ENCODE measurements at regions of chr7 and their contacts with region 1.

Region 1: DNA sequence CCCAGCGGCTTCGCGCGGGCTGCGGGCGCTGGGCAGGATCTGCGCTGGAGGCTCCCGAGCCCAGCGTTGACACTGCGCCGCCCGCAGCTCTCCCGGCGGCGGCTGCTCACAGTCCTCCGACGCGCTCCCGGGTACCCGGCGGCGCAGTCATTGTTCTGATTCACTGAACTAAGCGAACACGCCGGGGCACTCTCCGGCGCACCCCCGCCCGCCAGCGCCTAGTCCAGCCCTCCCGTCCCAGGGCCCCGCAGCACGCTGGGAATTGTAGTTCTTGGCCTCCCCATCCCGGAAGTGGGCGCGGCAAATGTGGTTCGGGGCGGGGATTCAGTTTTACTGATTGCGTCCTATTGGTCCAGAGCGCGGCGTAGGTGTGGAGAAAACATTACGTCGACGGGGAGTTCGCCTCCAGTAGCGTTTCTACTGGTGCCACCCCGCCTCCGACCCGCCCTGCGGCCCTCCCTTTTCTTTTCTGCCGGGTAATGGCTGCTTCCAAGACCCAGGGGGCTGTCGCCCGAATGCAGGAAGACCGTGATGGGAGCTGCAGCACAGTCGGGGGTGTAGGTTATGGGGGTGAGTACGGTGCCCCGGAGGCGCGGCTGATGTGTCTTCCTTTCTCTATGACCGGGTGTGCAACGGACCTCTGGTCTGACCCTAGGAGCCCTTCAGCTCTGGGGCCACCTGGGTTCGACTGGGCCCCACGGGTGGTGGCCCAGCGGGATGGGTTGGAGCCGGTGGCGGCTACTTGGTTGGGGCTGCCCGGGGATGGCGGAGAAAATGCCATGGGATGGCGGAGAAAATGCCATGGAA is at the starts of genes DOCK4 and ZNF277:
- DNase-seq: peak; percentile 97
- ATAC-seq: peak; percentile 92
- H3K4me3 ChIP-seq: peak within 1 kb of the TSS; percentile 96 to 98 (median 96)
- H3K27ac ChIP-seq: peak within 1 kb of the TSS; percentile 84
- H3K4me1 ChIP-seq: peaks cover 60% of the 10 kb centered on the region
- H3K27me3 ChIP-seq: no peaks in the 10 kb centered on the region; a peak in 1 of 5 replicates
- CTCF ChIP-seq: peak; percentile 42
- EP300 ChIP-seq: peak in 1 of 2 experiments; percentile 31; a peak in 1 of 4 replicates
- POLR2A ChIP-seq: peak; percentile 72 to 73
- RAD21 ChIP-seq: peak; percentile 52
- total RNA-seq, gene DOCK4: 13.5 and 19.1 TPM in 2 replicates
- total RNA-seq, gene ZNF277: 30.1 and 44.8 TPM in 2 replicates

Region 2: GRCh38 chr7:111561885-111562732 is 644.3 kb before region 1 on chr7 and contains the start of gene IMMP2L:
- CTCF ChIA-PET with region 1: no interaction called
- POLR2A ChIA-PET with region 1: no interaction called
- in situ Hi-C with region 1: no loop called
- intact Hi-C with region 1: no loop called
- DNase-seq: peak; percentile 74
- ATAC-seq: peak; percentile 97
- H3K4me3 ChIP-seq: peak within 1 kb of the TSS; percentile 66 to 81 (median 80)
- H3K27ac ChIP-seq: peak within 1 kb of the TSS; percentile 77
- H3K4me1 ChIP-seq: peaks cover 23% of the 10 kb centered on the region
- H3K27me3 ChIP-seq: no peaks in the 10 kb centered on the region
- CTCF ChIP-seq: peak; percentile 84
- EP300 ChIP-seq: no peak
- POLR2A ChIP-seq: peak; percentile 53 to 80
- RAD21 ChIP-seq: peak; percentile 64
- total RNA-seq, gene IMMP2L: 11.3 and 16.9 TPM in 2 replicates

Region 3: DNA sequence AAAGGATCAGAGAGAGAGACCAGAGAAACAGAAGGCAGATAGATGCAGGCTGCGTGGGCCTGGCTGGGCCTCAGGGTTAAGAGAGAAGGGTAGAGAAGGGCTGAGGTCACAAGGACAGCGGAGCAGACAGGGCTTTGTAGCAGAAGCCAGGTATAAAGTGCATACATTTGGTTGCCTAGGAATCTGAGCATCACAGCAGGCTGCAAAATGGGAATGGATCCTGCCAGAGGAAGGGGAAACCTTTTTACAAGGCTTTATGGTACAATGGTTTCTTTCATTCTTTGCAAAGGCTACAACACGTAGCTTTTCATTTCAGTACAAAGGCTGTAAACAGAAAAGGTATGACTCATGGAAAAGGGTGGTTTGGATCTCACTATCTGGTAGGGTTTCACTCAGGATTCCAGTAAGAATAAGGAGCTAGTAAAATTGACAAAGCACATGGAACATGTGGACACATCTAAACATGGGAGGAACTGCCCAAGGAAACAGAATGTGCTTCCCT is 275.4 kb before region 1 on chr7:
- CTCF ChIA-PET with region 1: no interaction called
- POLR2A ChIA-PET with region 1: interaction called, 4 read pairs
- in situ Hi-C with region 1: no loop called
- intact Hi-C with region 1: loop called (anchors 5 kb)
- DNase-seq: peak; percentile 96
- ATAC-seq: peak; percentile 98
- H3K4me3 ChIP-seq: peak overlapping the region in 2 of 3 experiments; percentile 11 to 12; a peak in 2 of 6 replicates
- H3K27ac ChIP-seq: peak overlapping the region; percentile 88
- H3K4me1 ChIP-seq: peaks cover 44% of the 10 kb centered on the region
- H3K27me3 ChIP-seq: no peaks in the 10 kb centered on the region
- CTCF ChIP-seq: no peak
- EP300 ChIP-seq: peak in 1 of 2 experiments; percentile 82; a peak in 2 of 4 replicates
- POLR2A ChIP-seq: no peak; a peak in 1 of 4 replicates
- RAD21 ChIP-seq: no peak

Region 4: DNA sequence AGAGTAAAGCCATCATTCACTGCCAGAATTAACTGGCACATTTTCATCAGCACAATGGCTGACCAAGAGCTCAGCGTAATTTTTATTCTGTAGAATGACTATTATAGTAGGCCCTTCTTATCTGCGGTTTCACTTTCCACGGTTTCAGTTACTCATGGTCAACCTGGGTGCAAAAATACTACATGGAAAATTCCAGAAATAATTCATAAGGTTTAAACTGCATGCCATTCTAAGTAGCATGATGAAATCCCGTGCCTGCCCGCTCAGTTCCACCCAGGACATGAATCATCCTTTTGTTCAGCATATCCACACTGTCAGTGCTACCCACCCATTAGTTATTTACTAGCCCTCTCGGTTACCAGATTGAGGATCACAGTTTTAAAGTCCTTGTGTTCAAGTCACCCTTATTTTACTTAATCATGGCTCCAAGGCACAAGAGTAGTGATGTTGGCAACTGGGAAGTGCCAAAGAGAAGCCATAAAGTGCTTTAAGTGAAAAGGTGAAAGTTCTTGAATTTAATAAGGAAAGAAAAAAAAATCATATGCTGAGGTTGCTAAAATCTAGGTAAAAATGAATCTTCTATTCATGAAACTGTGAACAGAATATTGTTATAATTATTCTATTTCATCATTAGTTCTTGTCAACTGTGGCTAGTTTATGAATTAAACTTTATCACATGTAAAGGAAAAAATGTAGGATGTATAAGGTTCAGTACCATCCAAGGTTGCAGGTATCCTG is 205.2 kb before region 1 on chr7:
- CTCF ChIA-PET with region 1: no interaction called
- POLR2A ChIA-PET with region 1: no interaction called
- in situ Hi-C with region 1: no loop called
- intact Hi-C with region 1: loop called (anchors 10 kb)
- DNase-seq: peak; percentile 26
- ATAC-seq: no peak
- H3K4me3 ChIP-seq: no peak overlapping the region
- H3K27ac ChIP-seq: no peak overlapping the region
- H3K4me1 ChIP-seq: peaks cover 21% of the 10 kb centered on the region
- H3K27me3 ChIP-seq: no peaks in the 10 kb centered on the region
- CTCF ChIP-seq: no peak
- EP300 ChIP-seq: no peak
- POLR2A ChIP-seq: no peak
- RAD21 ChIP-seq: no peak

Region 5: GRCh38 chr7:112089551-112089950 is 116.9 kb before region 1 on chr7:
- CTCF ChIA-PET with region 1: no interaction called
- POLR2A ChIA-PET with region 1: no interaction called
- in situ Hi-C with region 1: no loop called
- intact Hi-C with region 1: loop called (anchors 5 kb)
- DNase-seq: no peak
- ATAC-seq: no peak
- H3K4me3 ChIP-seq: no peak overlapping the region
- H3K27ac ChIP-seq: no peak overlapping the region
- H3K4me1 ChIP-seq: peaks cover 69% of the 10 kb centered on the region
- H3K27me3 ChIP-seq: no peaks in the 10 kb centered on the region
- CTCF ChIP-seq: no peak
- EP300 ChIP-seq: no peak
- POLR2A ChIP-seq: no peak
- RAD21 ChIP-seq: no peak

Region 6: GRCh38 chr7:112192236-112193154 is 13.9 kb before region 1 on chr7:
- CTCF ChIA-PET with region 1: no interaction called
- POLR2A ChIA-PET with region 1: interaction called, 27 read pairs
- in situ Hi-C with region 1: no loop called
- intact Hi-C with region 1: no loop called
- DNase-seq: no peak
- ATAC-seq: no peak
- H3K4me3 ChIP-seq: no peak overlapping the region
- H3K27ac ChIP-seq: no peak overlapping the region
- H3K4me1 ChIP-seq: peaks cover 53% of the 10 kb centered on the region
- H3K27me3 ChIP-seq: no peaks in the 10 kb centered on the region
- CTCF ChIP-seq: no peak
- EP300 ChIP-seq: no peak
- POLR2A ChIP-seq: no peak
- RAD21 ChIP-seq: no peak

Region 7: DNA sequence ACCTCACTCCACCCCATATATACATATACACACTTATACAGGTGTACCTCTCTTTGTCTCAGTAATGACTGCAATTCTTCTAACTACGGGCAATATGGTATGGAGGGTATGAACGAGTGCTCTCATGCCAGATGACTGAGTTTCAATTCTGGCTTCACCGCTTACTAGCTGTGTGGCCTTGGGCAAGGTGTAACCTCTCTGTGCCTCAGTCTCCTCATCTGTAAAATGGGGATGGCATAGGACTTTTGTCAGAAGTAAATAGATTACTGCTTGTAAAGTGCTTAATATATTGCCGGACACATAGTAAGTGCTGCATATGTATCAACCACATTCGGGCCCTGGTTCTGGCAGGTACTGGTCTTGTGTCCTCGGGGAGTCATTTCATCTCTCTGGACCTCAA is 183.7 kb after region 1 on chr7:
- CTCF ChIA-PET with region 1: no interaction called
- POLR2A ChIA-PET with region 1: no interaction called
- in situ Hi-C with region 1: no loop called
- intact Hi-C with region 1: loop called (anchors 2 kb)
- DNase-seq: no peak
- ATAC-seq: peak; percentile 29; the same call in 2 of the 3 replicates
- H3K4me3 ChIP-seq: no peak overlapping the region
- H3K27ac ChIP-seq: no peak overlapping the region
- H3K4me1 ChIP-seq: peaks cover 9% of the 10 kb centered on the region
- H3K27me3 ChIP-seq: no peaks in the 10 kb centered on the region; a peak in 1 of 5 replicates
- CTCF ChIP-seq: no peak
- EP300 ChIP-seq: no peak
- POLR2A ChIP-seq: no peak
- RAD21 ChIP-seq: no peak

Region 8: DNA sequence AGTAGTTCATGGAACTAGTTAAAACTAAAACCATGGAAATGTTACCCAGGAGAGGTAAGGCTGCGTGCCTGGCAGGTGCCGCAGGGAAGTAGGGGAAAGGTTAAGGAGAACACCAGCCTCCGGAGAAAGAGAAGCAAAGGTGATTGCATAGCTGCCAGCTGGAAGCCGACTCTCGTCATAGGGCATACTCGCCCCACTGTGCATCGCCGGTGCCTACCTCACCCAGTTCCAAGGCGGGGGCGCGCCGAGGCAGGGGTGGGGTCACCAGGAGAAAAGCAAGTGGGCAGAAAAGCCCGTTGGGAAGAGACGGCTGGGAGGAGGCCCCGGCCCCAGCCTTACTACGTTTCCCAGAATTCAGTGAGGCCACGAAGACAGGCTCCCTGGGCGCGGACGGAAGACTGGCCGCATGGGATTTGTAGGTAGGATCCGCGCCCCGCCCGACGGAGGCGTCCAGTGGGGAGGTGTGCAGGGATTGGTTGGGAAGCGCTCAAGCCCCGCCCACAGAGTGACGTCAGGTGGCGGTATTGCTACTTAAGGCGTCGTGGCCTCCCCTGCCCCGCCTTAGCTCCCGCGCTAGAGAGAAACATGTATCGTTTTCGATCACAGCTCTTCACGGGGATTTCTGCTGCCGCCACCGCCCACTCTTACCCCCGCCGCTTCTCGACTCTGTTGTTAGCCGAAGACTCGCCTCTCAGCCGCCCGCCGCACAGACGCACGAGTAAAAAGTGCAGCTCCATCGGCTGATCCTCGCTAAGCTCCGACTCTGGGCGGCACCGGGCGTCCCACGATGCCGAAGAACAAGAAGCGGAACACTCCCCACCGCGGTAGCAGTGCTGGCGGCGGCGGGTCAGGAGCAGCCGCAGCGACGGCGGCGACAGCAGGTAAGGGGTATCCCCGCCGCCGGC is 243.7 kb after region 1 on chr7 and contains the start of gene IFRD1:
- CTCF ChIA-PET with region 1: no interaction called
- POLR2A ChIA-PET with region 1: interaction called, 24 read pairs
- in situ Hi-C with region 1: no loop called
- intact Hi-C with region 1: loop called (anchors 1 kb)
- DNase-seq: peak; percentile 96
- ATAC-seq: peak; percentile 91
- H3K4me3 ChIP-seq: peak within 1 kb of the TSS; percentile 97 to 100 (median 98)
- H3K27ac ChIP-seq: peak within 1 kb of the TSS; percentile 89
- H3K4me1 ChIP-seq: peaks cover 41% of the 10 kb centered on the region
- H3K27me3 ChIP-seq: no peaks in the 10 kb centered on the region; a peak in 1 of 5 replicates
- CTCF ChIP-seq: no peak
- EP300 ChIP-seq: no peak
- POLR2A ChIP-seq: peak; percentile 97 to 100
- RAD21 ChIP-seq: peak; percentile 37; the same call in 1 of the 2 replicates
- total RNA-seq, gene IFRD1: 55.0 and 55.5 TPM in 2 replicates